PC-9 (cell line): ENCODE measurements at regions of chr13 and their contacts with region 1.

Region 1: GRCh38 chr13:75675421-75675820 is 39.3 kb downstream of the LMO7 start:
- DNase-seq: no peak
- H3K4me3 ChIP-seq: no peak overlapping the region
- H3K27ac ChIP-seq: no peak overlapping the region
- H3K4me1 ChIP-seq: no peaks in the 10 kb centered on the region
- H3K27me3 ChIP-seq: no peaks in the 10 kb centered on the region
- CTCF ChIP-seq: no peak

Region 2: DNA sequence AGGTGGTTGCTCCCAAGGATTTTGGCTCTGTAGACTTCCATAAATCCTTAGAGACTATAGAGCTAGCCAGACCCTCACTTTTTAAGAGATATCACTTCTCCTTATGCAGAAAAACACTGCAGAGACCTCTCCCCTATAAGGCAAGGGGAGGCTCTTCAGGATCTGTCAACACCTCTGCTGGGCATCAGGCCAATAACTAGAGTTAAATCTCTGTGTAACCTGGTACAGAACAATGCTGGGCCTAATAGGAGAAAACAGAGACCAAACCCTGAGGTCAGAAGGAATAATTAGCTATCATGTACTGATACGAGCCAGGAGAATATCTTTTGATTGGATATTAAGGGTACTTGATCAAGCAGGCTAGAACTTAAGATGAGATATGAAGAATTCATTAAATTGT is 552.0 kb before region 1 on chr13:
- CTCF ChIA-PET with region 1: no interaction called
- POLR2A ChIA-PET with region 1: no interaction called
- intact Hi-C with region 1: no loop called
- DNase-seq: no peak
- H3K4me3 ChIP-seq: no peak overlapping the region
- H3K27ac ChIP-seq: no peak overlapping the region
- H3K4me1 ChIP-seq: no peaks in the 10 kb centered on the region
- H3K27me3 ChIP-seq: no peaks in the 10 kb centered on the region
- CTCF ChIP-seq: no peak

Region 3: DNA sequence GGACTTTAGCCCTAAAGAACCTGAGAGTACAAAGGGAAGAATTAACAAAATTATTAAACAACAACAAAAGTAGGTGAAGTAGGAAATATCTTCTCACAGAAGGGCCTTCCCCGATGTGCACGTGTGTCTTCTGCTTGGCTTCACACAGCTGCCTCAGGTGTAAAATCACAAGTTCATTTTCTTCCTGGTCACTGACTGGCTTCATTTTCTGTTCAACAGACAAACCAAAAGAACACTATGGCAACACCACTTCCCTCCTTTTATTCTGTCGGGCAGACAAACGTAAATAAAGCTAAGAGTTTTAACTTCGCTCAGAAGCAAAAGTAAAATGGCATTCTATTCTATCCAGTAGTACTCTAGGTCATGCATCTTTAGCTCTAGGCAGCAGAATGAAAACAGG is 334.4 kb before region 1 on chr13:
- CTCF ChIA-PET with region 1: no interaction called
- POLR2A ChIA-PET with region 1: no interaction called
- intact Hi-C with region 1: no loop called
- DNase-seq: no peak
- H3K4me3 ChIP-seq: no peak overlapping the region
- H3K27ac ChIP-seq: no peak overlapping the region
- H3K4me1 ChIP-seq: no peaks in the 10 kb centered on the region
- H3K27me3 ChIP-seq: no peaks in the 10 kb centered on the region
- CTCF ChIP-seq: no peak

Region 4: GRCh38 chr13:75713852-75714251 is 38.4 kb after region 1 on chr13:
- CTCF ChIA-PET with region 1: no interaction called
- POLR2A ChIA-PET with region 1: no interaction called
- intact Hi-C with region 1: no loop called
- DNase-seq: no peak
- H3K4me3 ChIP-seq: no peak overlapping the region
- H3K27ac ChIP-seq: no peak overlapping the region
- H3K4me1 ChIP-seq: peaks cover 21% of the 10 kb centered on the region
- H3K27me3 ChIP-seq: no peaks in the 10 kb centered on the region
- CTCF ChIP-seq: no peak

Region 5: GRCh38 chr13:77002590-77003190 is 1327.3 kb after region 1 on chr13:
- CTCF ChIA-PET with region 1: no interaction called
- POLR2A ChIA-PET with region 1: no interaction called
- intact Hi-C with region 1: loop called (anchors 1 kb)
- DNase-seq: peak in 1 of 2 experiments; percentile 9
- H3K4me3 ChIP-seq: no peak overlapping the region
- H3K27ac ChIP-seq: no peak overlapping the region
- H3K4me1 ChIP-seq: no peaks in the 10 kb centered on the region
- H3K27me3 ChIP-seq: no peaks in the 10 kb centered on the region
- CTCF ChIP-seq: peak; percentile 77